HEK293T (cell line): ENCODE measurements at regions of chr1 and their contacts with region 1.

Region 1: DNA sequence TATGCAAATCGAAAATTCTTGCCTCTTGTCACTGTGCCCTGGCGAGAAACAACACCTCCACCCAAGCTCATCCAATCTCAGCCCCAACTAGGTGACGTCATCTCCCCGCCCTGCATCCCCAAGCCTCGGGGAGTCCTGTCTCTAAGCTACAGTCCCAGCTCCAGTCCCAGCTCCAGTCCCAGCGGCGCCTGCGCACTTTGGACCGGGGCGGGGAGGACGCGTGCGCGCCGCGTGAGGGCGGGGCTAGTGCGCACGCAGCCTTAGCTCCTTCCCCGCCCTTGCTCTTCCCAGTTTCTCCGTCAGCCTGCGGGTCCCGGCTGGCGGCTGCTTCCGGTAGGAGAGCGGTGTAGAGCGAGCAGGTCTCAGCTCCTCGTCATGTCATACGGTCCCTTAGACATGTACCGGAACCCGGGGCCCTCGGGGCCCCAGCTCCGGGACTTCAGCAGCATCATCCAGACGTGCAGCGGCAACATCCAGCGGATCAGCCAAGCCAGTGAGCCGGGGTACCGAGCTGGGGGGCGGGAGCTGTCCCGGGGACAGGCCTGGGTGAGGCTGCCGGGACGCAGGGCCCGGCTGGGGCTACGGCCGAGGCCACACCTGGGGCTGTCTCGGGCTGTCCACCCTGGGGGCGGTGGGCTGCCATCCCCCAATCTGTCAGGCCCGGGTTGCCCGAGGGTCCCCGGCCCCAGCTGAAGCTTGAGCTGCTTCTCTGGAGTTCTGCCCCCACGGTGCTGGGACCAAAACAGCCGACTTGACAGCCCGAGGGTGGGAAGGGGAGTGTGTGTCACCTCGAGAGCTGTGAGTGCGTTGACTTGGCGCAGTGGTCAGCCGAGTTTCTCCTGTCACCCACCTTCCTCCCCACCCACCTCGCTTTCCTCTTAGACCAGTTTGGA is at the start of gene STX12:
- DNase-seq: peak; percentile 100

Region 2: GRCh38 chr1:27671964-27672749 is 101.0 kb before region 1 on chr1 and contains the start of gene IFI6:
- CTCF ChIA-PET with region 1: interaction called, 11 read pairs
- POLR2A ChIA-PET with region 1: interaction called, 8 read pairs
- DNase-seq: peak; percentile 84

Region 3: GRCh38 chr1:27725374-27726173 is 47.6 kb before region 1 on chr1 and contains the start of gene FAM76A:
- CTCF ChIA-PET with region 1: no interaction called
- POLR2A ChIA-PET with region 1: interaction called, 26 read pairs
- DNase-seq: peak; percentile 100

Region 4: GRCh38 chr1:27785781-27786455 is 12.7 kb after region 1 on chr1:
- CTCF ChIA-PET with region 1: interaction called, 4 read pairs
- POLR2A ChIA-PET with region 1: interaction called, 36 read pairs
- DNase-seq: no peak

Region 5: DNA sequence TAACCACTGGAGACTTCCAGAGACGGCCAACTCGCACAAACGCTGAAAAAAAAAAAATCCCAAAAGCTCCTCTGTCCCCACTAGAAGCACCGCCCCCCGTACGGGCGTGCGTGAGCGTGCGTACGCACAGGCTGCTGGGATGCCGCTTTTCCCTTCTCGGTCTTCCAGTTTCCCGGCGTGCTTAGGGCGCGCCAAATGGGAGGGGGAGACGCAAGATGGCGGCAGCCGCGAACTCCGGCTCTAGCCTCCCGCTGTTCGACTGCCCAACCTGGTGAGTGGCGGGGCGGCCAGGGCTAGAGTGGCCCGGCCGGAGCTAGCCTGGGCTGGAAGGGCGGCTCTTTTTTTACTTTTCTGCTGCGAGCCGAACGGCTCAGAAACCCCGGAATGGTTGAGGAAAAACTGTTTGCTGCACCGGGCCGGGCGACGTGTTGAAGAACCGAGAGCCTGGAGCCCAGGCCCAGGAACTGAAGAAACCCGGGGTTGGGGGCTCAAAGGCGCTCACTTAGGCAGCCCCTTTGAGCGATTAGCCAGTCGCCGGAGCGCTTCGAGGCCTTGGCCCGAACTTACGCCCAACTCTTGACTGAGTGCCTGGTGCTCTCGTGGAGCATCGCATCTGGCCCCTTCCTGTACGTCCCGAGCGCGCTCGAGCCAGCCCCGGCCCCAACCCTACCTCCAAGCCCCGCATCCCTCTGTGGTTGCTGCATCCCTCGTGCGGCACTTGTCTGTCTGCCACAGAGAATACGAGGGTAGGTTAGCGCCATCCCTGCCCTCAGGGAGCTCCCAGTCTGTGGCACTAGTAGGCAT is 57.6 kb after region 1 on chr1 and contains the start of gene PPP1R8:
- CTCF ChIA-PET with region 1: no interaction called
- POLR2A ChIA-PET with region 1: interaction called, 23 read pairs
- DNase-seq: peak; percentile 99